Mammary epithelial cell (primary cell): ENCODE measurements at regions of chr2 and their contacts with region 1.

Region 1: GRCh38 chr2:55961318-55961911 is 37.8 kb upstream of the EFEMP1 start:
- DNase-seq: peak; percentile 55
- H3K4me3 ChIP-seq: no peak overlapping the region
- H3K27ac ChIP-seq: no peak overlapping the region
- H3K4me1 ChIP-seq: peaks cover 20% of the 10 kb centered on the region
- H3K27me3 ChIP-seq: no peaks in the 10 kb centered on the region
- CTCF ChIP-seq: peak; percentile 54 to 74

Region 2: GRCh38 chr2:55761526-55761925 is 199.9 kb before region 1 on chr2:
- CTCF ChIA-PET with region 1: no interaction called
- dilution Hi-C with region 1: no loop called
- in situ Hi-C with region 1: loop called (anchors 10 to 25 kb)
- intact Hi-C with region 1: no loop called
- DNase-seq: peak; percentile 76
- H3K4me3 ChIP-seq: peak overlapping the region in 1 of 3 experiments; percentile 6
- H3K27ac ChIP-seq: peak overlapping the region; percentile 62
- H3K4me1 ChIP-seq: peaks cover 40% of the 10 kb centered on the region
- H3K27me3 ChIP-seq: no peaks in the 10 kb centered on the region
- CTCF ChIP-seq: no peak

Region 3: GRCh38 chr2:55862673-55863390 is 98.6 kb before region 1 on chr2:
- CTCF ChIA-PET with region 1: no interaction called
- dilution Hi-C with region 1: no loop called
- in situ Hi-C with region 1: no loop called
- intact Hi-C with region 1: loop called (anchors 2 kb)
- DNase-seq: peak; percentile 99
- H3K4me3 ChIP-seq: no peak overlapping the region
- H3K27ac ChIP-seq: peak overlapping the region; percentile 93
- H3K4me1 ChIP-seq: peaks cover 26% of the 10 kb centered on the region
- H3K27me3 ChIP-seq: no peaks in the 10 kb centered on the region
- CTCF ChIP-seq: no peak

Region 4: GRCh38 chr2:56009758-56010458 is 48.5 kb after region 1 on chr2:
- CTCF ChIA-PET with region 1: interaction called, 9 read pairs
- dilution Hi-C with region 1: no loop called
- in situ Hi-C with region 1: no loop called
- intact Hi-C with region 1: loop called (anchors 1 kb)
- DNase-seq: peak; percentile 35
- H3K4me3 ChIP-seq: no peak overlapping the region
- H3K27ac ChIP-seq: no peak overlapping the region
- H3K4me1 ChIP-seq: no peaks in the 10 kb centered on the region
- H3K27me3 ChIP-seq: no peaks in the 10 kb centered on the region
- CTCF ChIP-seq: peak; percentile 47 to 68